Mammary epithelial cell (primary cell): ENCODE measurements at regions of chr19 and their contacts with region 1.

Region 1: DNA sequence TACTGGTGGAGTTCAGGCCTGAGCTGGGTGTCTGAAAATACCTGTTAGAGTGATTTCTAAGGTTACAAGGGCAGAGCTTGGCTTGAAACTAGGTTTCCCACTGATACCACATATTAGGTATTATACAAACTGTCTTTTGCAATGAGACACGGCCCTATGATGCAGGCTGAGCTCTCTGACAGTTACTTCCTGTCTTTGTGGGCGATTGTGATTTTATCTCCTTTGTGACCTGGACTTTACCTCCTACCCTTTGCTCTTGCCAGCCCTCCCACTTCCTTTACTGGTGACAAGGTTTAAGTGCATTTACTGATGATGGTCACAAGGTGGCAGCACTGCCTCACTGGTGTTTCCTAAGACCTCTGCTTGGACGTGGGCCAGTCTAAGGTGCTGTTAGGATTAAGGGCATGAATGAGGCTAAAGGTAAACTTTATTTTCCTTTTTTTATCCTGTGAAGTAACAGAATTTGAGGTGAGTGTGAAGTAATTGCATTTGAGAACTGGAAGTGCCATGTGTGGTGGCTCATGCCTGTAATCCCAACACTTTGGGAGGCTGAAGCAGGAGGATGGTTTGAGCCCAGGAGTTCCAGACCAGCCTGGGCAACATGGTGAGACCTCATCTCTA is 7.7 kb upstream of the CXCL17 start:
- DNase-seq: peak; percentile 82
- H3K4me3 ChIP-seq: no peak overlapping the region
- H3K27ac ChIP-seq: no peak overlapping the region
- H3K4me1 ChIP-seq: peaks cover 14% of the 10 kb centered on the region
- H3K27me3 ChIP-seq: no peaks in the 10 kb centered on the region
- CTCF ChIP-seq: peak; percentile 79 to 83

Region 2: DNA sequence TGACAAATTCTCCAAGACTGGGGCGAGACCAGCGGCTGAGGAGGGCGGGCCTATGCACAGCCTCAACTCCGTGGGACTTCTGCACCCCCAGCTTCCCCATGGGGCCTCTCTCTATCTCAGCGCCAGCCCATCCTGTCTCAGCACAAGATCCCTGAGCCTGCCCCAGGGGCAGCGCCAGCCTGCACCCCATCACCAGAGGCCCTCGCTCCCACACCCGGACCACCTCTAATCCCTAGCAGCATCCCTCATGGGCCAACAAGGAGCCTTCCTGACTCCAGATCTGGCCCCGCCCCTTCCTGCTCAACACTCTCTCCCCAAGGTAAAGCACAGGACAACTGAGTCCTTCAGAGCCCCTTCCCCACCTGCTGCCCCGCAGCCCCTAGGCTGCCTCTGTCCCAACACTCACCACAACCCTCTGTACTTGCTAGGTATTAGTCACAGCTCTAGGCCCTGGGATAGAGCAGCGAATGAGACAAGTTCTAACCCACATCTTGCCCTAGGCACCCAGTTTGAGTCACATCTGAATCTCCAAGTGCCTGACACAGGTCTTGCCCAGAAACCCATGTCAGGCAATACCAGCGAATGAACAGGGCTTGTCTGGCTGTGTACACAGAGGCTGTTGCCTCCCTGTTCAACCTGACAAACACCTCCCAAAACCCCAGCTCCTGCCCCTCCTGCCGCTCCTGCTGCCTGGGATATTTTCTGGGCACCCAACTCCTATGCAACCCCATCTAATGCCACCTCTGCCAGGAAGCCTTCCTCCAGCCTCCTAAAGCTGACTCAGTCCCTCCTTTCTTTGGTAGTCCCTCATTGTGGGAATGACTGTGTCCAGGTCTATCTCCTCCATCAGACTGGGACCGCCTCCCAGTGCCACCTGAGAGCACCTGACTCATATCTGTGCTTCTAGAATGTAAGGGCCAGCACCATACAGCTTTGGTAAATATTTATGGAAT is 399.0 kb before region 1 on chr19:
- CTCF ChIA-PET with region 1: no interaction called
- dilution Hi-C with region 1: no loop called
- in situ Hi-C with region 1: no loop called
- intact Hi-C with region 1: no loop called
- DNase-seq: peak; percentile 99
- H3K4me3 ChIP-seq: no peak overlapping the region
- H3K27ac ChIP-seq: peak overlapping the region; percentile 69
- H3K4me1 ChIP-seq: peaks cover 38% of the 10 kb centered on the region
- H3K27me3 ChIP-seq: no peaks in the 10 kb centered on the region
- CTCF ChIP-seq: no peak

Region 3: DNA sequence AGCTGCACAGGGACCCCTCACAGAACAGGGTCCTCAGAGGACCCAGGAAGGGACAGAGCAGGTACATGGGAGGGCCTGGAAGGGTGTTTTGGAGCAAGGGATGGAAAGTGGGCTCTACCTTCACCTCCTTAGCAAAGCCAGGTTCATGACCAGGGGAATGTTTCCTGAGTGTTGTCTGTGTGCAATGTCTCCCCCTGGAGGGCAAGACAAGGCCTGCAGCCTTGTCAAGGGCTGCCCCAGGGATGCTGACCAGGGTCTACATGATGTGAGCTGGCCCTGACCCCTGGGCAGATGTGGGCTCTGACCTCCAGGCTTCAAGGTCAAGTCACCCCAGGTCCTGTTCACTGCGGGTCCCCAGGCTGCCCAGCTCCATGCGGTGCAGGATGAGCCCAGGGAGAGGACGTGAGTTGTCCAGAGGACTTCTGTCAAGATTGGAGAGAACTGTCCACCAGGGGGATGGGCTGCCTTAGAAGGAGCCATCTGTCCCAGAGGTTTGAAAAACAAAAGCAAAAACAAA is 78.9 kb after region 1 on chr19:
- CTCF ChIA-PET with region 1: no interaction called
- dilution Hi-C with region 1: no loop called
- in situ Hi-C with region 1: loop called (anchors 5 kb)
- intact Hi-C with region 1: loop called (anchors 1 kb)
- DNase-seq: peak; percentile 44
- H3K4me3 ChIP-seq: no peak overlapping the region
- H3K27ac ChIP-seq: no peak overlapping the region
- H3K4me1 ChIP-seq: peaks cover 21% of the 10 kb centered on the region
- H3K27me3 ChIP-seq: no peaks in the 10 kb centered on the region
- CTCF ChIP-seq: peak; percentile 92 to 97

Region 4: DNA sequence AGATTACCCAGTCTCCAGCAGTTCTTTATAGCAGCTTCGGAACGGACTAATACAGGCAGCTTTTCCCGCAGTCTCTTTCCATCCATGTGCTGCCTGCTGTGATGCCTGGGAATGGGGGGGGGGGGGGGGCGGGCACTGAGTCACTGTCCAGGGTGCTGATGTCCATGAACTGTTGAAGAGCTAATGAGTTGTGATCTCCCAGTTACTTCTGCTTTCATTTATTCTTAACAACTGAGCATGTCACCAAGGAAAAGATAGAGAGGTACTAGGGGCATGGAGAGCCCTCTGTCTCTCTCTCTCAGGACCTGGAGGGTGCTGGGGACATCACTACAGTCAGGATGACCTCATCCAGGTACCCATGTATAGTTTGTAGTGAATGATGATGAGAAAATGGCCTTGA is 98.1 kb after region 1 on chr19:
- CTCF ChIA-PET with region 1: no interaction called
- dilution Hi-C with region 1: loop called (anchors 5 kb)
- in situ Hi-C with region 1: no loop called
- intact Hi-C with region 1: no loop called
- DNase-seq: no peak
- H3K4me3 ChIP-seq: no peak overlapping the region
- H3K27ac ChIP-seq: no peak overlapping the region
- H3K4me1 ChIP-seq: no peaks in the 10 kb centered on the region
- H3K27me3 ChIP-seq: no peaks in the 10 kb centered on the region
- CTCF ChIP-seq: no peak

Region 5: DNA sequence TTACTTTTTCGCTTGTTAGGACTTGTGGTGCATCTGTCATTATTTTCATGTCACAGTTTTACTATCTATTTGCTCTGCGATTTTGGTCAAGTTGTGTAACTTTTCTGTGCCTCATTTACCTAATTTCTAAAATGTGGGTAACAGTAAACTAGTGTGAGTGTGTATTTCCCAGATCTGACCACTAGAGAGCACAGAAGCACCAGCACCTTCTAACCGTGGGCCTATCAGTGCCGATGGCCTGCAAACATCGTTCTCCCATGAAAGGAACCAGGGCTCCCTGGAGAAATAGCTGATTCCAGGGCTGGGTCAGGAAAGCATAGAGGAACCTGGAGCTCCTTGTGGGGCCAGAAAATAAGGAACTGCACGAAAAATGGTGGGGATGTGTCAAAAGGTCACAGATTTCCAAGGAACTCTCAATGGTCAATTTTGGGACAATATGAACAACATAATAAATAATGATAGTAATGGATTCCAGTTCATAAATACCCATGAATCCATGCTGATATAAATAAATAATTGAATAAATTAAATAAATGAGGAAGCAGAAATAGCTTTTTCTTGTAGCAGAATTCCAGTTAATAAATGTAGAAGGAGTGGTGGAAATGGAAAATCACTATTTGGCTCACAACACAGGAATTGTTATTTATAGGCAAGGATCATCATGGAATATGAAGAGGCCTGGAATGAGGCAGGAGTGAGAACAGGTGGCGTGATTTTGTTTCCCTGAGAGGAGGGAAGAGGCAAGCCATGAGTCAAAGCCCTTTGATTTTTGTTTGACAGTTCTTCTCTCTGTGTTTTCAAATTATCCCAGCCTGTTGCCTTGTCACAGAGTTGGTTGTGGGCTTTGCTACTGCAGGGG is 113.2 kb after region 1 on chr19:
- CTCF ChIA-PET with region 1: no interaction called
- dilution Hi-C with region 1: no loop called
- in situ Hi-C with region 1: no loop called
- intact Hi-C with region 1: loop called (anchors 1 kb)
- DNase-seq: peak; percentile 22
- H3K4me3 ChIP-seq: no peak overlapping the region
- H3K27ac ChIP-seq: no peak overlapping the region
- H3K4me1 ChIP-seq: peaks cover 7% of the 10 kb centered on the region
- H3K27me3 ChIP-seq: no peaks in the 10 kb centered on the region
- CTCF ChIP-seq: peak; percentile 60 to 74

Region 6: GRCh38 chr19:42596391-42597072 is 146.1 kb after region 1 on chr19:
- CTCF ChIA-PET with region 1: no interaction called
- dilution Hi-C with region 1: no loop called
- in situ Hi-C with region 1: loop called in 1 of 2 experiments (anchors 10 kb)
- intact Hi-C with region 1: loop called (anchors 1 kb)
- DNase-seq: no peak
- H3K4me3 ChIP-seq: no peak overlapping the region
- H3K27ac ChIP-seq: no peak overlapping the region
- H3K4me1 ChIP-seq: no peaks in the 10 kb centered on the region
- H3K27me3 ChIP-seq: no peaks in the 10 kb centered on the region
- CTCF ChIP-seq: peak; percentile 91 to 95